Mammary epithelial cell (primary cell): ENCODE measurements at regions of chr10 and their contacts with region 1.

Region 1: DNA sequence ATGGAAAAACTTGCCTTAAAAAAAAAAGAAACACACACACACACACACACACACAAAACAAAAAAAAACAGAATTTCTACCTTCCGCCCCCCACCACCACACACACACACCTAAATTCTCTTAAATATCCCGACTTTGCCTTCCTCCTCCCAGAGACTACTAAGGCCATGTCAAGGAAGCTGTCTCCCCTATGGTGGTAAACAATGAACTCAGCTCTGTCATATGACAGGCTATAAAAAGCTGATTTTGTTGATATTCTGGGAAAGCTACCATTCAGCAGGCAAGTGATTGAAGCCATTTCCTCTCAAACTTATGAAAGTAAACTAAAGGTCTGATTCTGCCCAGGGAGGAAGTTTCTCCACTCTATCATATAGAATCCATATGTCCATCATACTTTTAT is 471.0 kb downstream of the GFRA1 start:
- DNase-seq: no peak
- H3K4me3 ChIP-seq: no peak overlapping the region
- H3K27ac ChIP-seq: no peak overlapping the region
- H3K4me1 ChIP-seq: no peaks in the 10 kb centered on the region
- H3K27me3 ChIP-seq: no peaks in the 10 kb centered on the region
- CTCF ChIP-seq: no peak

Region 2: GRCh38 chr10:116287906-116288501 is 486.0 kb after region 1 on chr10:
- CTCF ChIA-PET with region 1: no interaction called
- dilution Hi-C with region 1: no loop called
- in situ Hi-C with region 1: no loop called
- intact Hi-C with region 1: loop called (anchors 1 kb)
- DNase-seq: no peak
- H3K4me3 ChIP-seq: no peak overlapping the region
- H3K27ac ChIP-seq: no peak overlapping the region
- H3K4me1 ChIP-seq: no peaks in the 10 kb centered on the region
- H3K27me3 ChIP-seq: no peaks in the 10 kb centered on the region
- CTCF ChIP-seq: peak; percentile 70 to 72